ENCODE measurements at regions of chr11 and their contacts with region 1.

Region 1: DNA sequence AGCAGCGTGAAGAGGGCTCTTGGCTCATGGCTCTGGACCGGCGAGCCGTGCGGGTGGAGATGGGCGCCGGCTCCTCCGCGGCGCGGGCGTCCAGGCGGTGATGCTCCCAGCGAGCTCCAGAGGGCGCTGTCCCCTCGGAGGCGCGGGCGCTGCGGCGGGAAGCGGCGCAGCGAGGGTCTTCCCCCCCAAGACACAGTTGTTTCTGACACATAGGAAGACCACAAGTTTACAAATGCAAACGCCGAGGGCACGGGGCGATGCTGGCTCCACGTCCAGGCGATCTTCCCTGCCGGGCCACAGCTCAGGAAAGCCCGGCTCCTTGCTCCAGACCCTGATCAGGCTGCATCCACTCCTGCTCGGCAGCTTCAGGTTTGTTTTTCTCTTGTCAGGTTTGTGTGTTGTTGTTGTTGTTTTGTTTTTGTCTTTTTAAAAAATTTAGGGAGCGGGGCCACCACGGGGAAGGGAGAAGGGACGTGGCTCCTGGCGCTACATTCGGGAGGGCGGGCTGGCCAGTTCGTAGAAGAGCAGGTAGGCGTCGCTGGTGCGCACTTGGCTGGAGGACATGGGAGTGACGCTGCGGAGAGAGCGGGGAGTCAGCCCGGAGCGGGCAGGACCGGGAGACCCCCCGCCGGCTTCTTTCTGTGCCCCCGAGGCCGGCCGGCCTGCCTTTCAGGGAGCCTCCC is 10.0 kb upstream of the MFRP start:
- DNase-seq: peak; percentile 52 to 87 (median 68)
- ATAC-seq: peak; percentile 94
- H3K4me3 ChIP-seq: peak overlapping the region; percentile 62
- H3K4me3 Mint-ChIP-seq: peak overlapping the region; percentile 89
- H3K27ac ChIP-seq: no peak overlapping the region
- H3K27ac Mint-ChIP-seq: peak overlapping the region; percentile 52
- H3K4me1 ChIP-seq: peaks cover 14% of the 10 kb centered on the region
- H3K4me1 Mint-ChIP-seq: peaks cover 5% of the 10 kb centered on the region
- H3K27me3 ChIP-seq: peaks cover 4 to 17% of the 10 kb centered on the region in 2 experiments
- H3K27me3 Mint-ChIP-seq: peaks cover 40% of the 10 kb centered on the region
- CTCF ChIP-seq: peak; percentile 99

Region 2: GRCh38 chr11:119338318-119338907 is 18.1 kb before region 1 on chr11:
- CTCF ChIA-PET with region 1: interaction called, 19 read pairs
- POLR2A ChIA-PET with region 1: interaction called, 4 read pairs
- intact Hi-C with region 1: no loop called
- DNase-seq: peak; percentile 50 to 84 (median 60)
- ATAC-seq: peak; percentile 47
- H3K4me3 ChIP-seq: no peak overlapping the region
- H3K4me3 Mint-ChIP-seq: peak overlapping the region; percentile 85
- H3K27ac ChIP-seq: no peak overlapping the region
- H3K27ac Mint-ChIP-seq: peak overlapping the region; percentile 70
- H3K4me1 ChIP-seq: peaks cover 51% of the 10 kb centered on the region
- H3K4me1 Mint-ChIP-seq: peaks cover 36% of the 10 kb centered on the region
- H3K27me3 ChIP-seq: peaks cover 31 to 45% of the 10 kb centered on the region in 2 experiments
- H3K27me3 Mint-ChIP-seq: peaks cover 42% of the 10 kb centered on the region
- CTCF ChIP-seq: peak; percentile 78

Region 3: DNA sequence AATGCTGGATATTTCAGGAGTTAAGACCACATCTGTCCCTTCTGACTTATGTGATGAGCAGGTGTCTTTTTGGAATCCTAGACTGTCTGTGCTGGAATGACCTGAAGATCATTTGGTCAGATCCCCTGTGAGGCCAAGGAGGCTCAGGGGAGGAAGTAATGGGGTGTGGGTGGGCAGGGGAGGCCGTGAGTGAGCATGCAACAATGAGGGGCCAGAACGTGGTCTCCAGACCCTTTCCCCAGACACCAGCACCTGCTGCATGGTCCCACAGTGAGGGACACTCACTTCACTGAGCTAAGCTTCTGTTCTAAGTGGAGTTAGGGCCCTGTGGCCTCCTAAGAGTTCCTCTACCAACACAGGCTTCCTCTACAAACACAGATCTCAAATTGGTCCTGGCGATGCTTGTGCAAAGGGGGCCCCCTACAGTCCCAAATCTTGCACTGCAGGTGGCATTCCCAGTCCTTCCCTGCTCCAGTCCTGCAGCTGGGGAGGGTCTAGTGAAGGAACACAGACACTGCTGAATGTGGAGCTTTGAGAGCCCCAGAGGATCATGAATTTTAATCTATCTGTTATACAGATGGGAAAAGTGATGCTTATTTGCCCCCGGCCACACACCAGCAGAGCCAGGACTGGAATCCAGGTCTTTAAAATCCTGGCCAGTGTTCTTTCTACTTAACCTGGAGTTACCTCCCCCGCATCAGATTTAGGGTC is 17.6 kb after region 1 on chr11:
- CTCF ChIA-PET with region 1: interaction called, 66 read pairs
- POLR2A ChIA-PET with region 1: interaction called, 3 read pairs
- intact Hi-C with region 1: no loop called
- DNase-seq: peak in 8 of 14 experiments; percentile 15 to 66 (median 38)
- ATAC-seq: peak; percentile 51
- H3K4me3 ChIP-seq: no peak overlapping the region
- H3K4me3 Mint-ChIP-seq: no peak overlapping the region
- H3K27ac ChIP-seq: no peak overlapping the region
- H3K27ac Mint-ChIP-seq: no peak overlapping the region
- H3K4me1 ChIP-seq: peaks cover 18% of the 10 kb centered on the region
- H3K4me1 Mint-ChIP-seq: no peaks in the 10 kb centered on the region
- H3K27me3 ChIP-seq: peaks cover 2 to 5% of the 10 kb centered on the region in 2 experiments
- H3K27me3 Mint-ChIP-seq: peaks cover 27% of the 10 kb centered on the region
- CTCF ChIP-seq: peak; percentile 63

Region 4: DNA sequence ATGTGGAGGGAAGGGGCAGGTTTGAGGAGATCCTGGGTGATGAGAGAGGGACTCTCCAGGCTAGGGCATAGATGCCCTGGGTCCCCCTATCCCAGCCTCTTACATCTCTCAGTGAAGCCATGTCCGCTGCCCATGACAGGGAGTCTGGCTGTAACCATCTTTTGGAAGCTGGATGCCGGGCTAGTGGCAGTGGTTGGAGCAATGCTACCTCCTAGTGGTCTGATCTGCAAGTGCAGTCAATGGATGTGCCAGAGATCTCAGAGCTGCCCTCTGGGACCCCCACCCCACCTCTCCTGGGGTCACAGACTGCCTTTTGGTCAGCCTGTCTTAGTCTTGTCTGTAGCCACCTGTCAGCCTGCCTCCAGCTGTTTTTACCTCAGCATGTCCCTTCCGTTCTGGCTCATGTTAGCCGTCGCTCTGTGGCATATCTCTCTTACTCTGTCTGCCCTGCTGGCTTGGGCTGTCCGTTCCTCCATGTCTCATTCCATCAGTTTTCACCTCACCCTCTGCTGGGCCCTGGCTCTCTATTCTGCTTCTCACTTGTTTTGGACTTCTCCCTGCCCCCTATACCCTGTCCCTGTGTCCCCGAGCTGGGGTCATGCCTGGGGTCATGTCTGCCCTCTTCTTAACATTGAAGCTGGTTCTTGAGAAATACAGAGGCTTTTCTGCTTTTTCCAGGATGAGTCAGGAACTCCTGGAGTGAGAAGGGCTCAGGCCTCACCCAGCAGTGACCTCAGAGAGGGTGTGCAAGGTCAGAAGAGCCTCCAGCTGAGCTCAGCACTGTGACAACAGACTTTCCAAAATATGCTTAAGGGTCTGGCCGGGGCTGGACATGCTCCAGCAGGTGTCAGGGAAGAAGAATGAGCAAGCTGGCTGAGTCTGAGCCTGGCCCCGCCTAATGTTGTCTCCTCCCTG is 118.4 kb after region 1 on chr11:
- CTCF ChIA-PET with region 1: interaction called, 40 read pairs
- POLR2A ChIA-PET with region 1: interaction called, 3 read pairs
- intact Hi-C with region 1: loop called (anchors 1 kb)
- DNase-seq: peak in 13 of 14 experiments; percentile 7 to 73 (median 37)
- ATAC-seq: peak; percentile 63
- H3K4me3 ChIP-seq: no peak overlapping the region
- H3K4me3 Mint-ChIP-seq: no peak overlapping the region
- H3K27ac ChIP-seq: no peak overlapping the region
- H3K27ac Mint-ChIP-seq: no peak overlapping the region
- H3K4me1 ChIP-seq: no peaks in the 10 kb centered on the region
- H3K4me1 Mint-ChIP-seq: no peaks in the 10 kb centered on the region
- H3K27me3 ChIP-seq: peaks cover 3 to 7% of the 10 kb centered on the region in 2 experiments
- H3K27me3 Mint-ChIP-seq: peaks cover 54% of the 10 kb centered on the region
- CTCF ChIP-seq: peak; percentile 62

Region 5: DNA sequence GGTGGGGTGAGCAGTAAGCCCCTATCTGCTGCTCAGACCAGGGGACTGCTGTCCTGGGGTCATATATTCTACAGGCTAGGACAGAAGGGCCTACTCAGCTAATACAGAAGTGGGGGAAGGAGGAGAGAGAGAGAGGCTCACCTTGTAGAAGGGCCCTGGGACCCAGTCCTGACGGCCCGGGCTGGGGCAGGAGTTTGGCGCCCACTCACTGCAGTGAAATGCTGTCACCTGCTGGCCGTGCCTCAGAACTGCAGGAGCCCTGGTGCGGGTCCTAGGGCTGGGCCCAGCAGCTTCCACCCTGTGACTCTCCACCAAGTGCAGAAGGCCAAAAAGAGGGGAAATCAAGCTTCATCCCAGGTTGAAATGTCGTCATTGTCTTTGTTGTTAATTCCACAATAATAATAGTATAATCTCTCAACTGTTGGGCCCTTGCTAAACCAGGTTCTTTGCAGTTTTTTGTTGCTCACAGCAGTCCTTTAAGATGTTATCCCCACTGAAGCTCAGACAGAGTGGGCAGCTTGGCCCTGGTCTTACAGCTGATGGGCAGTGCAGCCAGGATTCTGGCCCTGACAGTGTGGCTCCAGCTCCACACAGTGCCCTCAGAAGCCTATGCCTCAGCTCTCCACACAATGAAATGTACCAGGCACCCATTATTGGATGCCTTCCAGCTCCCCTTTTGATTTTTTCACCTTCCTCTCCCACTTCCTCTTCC is 751.8 kb after region 1 on chr11:
- CTCF ChIA-PET with region 1: no interaction called
- POLR2A ChIA-PET with region 1: no interaction called
- intact Hi-C with region 1: loop called in 1 of 2 experiments (anchors 5 kb)
- DNase-seq: peak; percentile 13 to 65 (median 46)
- ATAC-seq: peak; percentile 57
- H3K4me3 ChIP-seq: no peak overlapping the region
- H3K4me3 Mint-ChIP-seq: no peak overlapping the region
- H3K27ac ChIP-seq: no peak overlapping the region
- H3K27ac Mint-ChIP-seq: no peak overlapping the region
- H3K4me1 ChIP-seq: no peaks in the 10 kb centered on the region
- H3K4me1 Mint-ChIP-seq: no peaks in the 10 kb centered on the region
- H3K27me3 ChIP-seq: peaks cover 5 to 6% of the 10 kb centered on the region in 2 experiments
- H3K27me3 Mint-ChIP-seq: peaks cover 16% of the 10 kb centered on the region
- CTCF ChIP-seq: peak; percentile 88